ENCODE measurements at regions of chr6 and their contacts with region 1.

Region 1: DNA sequence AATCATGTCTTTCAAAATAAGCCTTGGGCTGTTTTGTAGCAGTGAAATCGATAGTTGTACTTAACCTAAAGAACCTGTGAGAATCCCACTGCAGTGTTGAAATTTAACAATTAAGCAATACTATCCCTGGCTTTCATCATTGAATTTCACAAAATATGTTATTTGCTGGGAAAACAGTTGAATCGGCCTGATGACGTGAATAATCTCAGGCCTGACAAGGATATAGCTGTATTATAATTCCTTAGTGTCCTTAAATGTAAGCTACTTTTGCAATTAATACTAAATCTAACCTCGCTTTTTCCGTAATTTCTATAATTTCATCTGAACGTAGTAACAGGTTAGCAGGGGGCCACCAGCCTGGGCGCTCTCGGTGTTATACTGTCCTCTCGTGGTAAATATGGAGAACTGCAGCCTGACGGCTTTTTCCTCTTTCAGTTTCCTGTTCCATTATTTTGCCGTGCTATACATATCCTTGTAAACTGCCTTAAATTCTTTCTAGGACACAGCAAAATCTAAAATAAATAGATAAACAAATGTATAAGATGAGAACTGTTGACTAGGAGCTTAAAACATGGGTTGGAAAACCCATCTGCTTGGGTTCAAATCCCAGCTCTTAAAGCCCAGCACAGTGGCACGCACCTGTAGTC is 24.0 kb downstream of the MTFR2 start:
- H3K4me3 ChIP-seq: no peak overlapping the region
- H3K27ac ChIP-seq: no peak overlapping the region
- H3K4me1 ChIP-seq: no peaks in the 10 kb centered on the region
- CTCF ChIP-seq: peak; percentile 86

Region 2: DNA sequence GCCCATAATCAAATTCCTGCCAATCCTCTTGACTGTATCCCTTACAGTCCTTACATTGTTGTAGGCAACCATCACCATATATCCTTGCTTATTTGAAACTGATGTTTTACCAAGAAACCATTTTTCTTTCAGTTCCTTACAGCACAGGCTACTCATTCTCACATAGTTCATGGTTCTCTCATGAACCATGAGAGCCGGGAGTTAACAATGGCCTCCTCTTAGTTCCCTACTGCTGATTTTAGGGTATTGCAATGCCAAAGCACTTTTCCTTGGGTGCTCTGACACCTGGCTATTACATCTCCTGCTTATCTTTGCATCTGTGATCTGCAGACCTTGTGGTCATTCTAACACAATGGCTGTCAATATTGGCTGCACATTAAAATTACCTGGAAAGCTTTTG is 911.6 kb before region 1 on chr6:
- CTCF ChIA-PET with region 1: no interaction called
- POLR2A ChIA-PET with region 1: no interaction called
- H3K4me3 ChIP-seq: no peak overlapping the region
- H3K27ac ChIP-seq: no peak overlapping the region
- H3K4me1 ChIP-seq: no peaks in the 10 kb centered on the region
- CTCF ChIP-seq: no peak

Region 3: GRCh38 chr6:135520781-135521180 is 705.4 kb before region 1 on chr6:
- CTCF ChIA-PET with region 1: interaction called, 12 read pairs
- POLR2A ChIA-PET with region 1: no interaction called
- H3K4me3 ChIP-seq: no peak overlapping the region
- H3K27ac ChIP-seq: no peak overlapping the region
- H3K4me1 ChIP-seq: no peaks in the 10 kb centered on the region
- CTCF ChIP-seq: no peak

Region 4: DNA sequence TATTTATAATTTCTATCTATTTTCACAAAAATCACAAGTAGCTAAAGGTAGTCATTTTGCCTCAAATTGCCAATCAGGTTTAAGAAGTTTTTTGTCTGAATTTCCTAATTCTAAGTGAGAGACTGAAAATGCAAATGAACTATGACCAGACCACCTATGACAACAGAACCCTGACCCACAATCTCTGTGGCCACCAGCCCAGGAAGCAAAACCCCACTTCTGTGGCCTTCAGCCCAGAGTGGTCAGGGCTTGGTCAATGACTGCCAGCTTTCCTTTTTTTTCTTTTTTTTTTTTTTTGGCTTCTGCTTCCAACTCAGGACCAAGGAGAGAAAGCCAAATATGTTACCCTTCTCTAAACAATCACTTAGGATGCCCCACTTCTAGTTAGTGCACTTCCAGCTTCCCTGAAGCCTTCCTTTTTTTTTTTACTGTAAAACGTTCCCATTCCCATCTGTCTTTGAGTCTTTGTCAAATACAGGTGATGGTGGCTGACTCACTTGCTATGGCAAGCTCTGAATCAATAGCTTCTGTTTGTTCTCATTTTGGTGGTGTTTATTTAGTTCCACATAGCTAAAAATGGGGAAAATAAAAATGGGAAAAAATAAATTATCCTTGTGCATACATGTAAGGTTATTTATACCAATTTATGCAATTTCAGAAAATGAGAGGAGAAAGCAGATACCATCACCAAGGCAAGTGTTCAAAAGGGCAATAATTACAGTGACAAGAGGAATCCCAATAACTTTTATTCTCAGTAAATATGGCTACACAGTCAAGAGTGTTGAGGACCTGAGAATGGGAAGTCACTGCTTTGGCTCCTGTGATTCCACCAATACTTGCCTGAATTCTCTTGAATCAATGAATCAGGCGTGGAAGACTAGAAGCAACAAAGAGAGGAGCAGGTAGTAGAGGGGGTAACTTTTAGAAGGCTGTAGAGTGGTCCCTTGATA is 544.9 kb before region 1 on chr6:
- CTCF ChIA-PET with region 1: interaction called, 34 read pairs
- POLR2A ChIA-PET with region 1: no interaction called
- H3K4me3 ChIP-seq: no peak overlapping the region
- H3K27ac ChIP-seq: no peak overlapping the region
- H3K4me1 ChIP-seq: no peaks in the 10 kb centered on the region
- CTCF ChIP-seq: no peak

Region 5: GRCh38 chr6:135938576-135939207 is 287.5 kb before region 1 on chr6:
- CTCF ChIA-PET with region 1: interaction called, 19 read pairs
- POLR2A ChIA-PET with region 1: no interaction called
- H3K4me3 ChIP-seq: no peak overlapping the region
- H3K27ac ChIP-seq: no peak overlapping the region
- H3K4me1 ChIP-seq: peaks cover 4% of the 10 kb centered on the region
- CTCF ChIP-seq: no peak

Region 6: GRCh38 chr6:136201732-136202131 is 24.4 kb before region 1 on chr6:
- CTCF ChIA-PET with region 1: interaction called, 26 read pairs
- POLR2A ChIA-PET with region 1: no interaction called
- H3K4me3 ChIP-seq: no peak overlapping the region
- H3K27ac ChIP-seq: no peak overlapping the region
- H3K4me1 ChIP-seq: no peaks in the 10 kb centered on the region
- CTCF ChIP-seq: peak; percentile 27

Region 7: DNA sequence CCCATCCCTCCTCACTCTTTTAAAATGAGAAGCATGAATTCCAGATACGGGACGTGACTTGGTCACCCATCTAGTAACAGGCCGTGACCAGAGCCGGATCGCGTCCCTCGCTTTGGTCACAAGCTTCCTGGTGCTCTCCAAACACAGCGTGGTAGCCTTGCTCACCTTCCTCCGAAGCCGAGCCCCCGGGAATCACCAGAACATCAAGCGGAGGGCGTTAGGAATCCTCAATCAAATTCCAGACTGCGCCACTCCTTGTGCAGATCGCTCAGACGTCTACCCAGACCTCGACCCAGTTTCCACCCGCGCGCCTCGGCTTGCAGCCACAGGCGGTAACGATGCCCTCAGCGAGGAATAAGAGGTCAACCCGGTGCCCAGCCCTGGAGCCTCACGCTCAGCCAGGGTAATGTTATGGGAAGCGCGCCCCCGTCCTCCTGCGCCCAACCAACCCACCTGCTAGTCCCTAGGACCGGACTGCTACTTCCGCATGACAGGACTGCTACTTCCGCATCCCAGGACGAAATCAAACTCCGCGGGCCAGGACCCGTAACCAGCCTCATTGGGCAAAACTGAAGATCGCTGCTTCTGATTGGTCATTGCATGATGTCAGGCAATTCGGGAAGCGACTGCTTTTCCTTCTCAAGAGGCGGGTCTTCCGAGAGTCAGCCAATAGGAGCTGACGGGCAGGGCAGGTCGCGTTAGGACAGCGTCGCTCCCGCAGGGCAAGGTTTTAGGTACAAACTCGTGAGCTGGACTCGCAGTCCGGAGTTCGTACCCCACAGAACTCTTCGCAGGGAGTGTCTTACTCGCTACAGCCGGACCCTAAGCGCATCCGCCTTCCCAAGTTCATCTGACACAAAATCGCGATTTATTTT is 23.9 kb after region 1 on chr6 and contains the start of gene MTFR2:
- CTCF ChIA-PET with region 1: interaction called, 7 read pairs
- POLR2A ChIA-PET with region 1: interaction called, 11 read pairs
- H3K4me3 ChIP-seq: peak within 1 kb of the TSS; percentile 80
- H3K27ac ChIP-seq: peak within 1 kb of the TSS; percentile 51
- H3K4me1 ChIP-seq: peaks cover 12% of the 10 kb centered on the region; the same call in 1 of the 2 replicates
- CTCF ChIP-seq: peak; percentile 87; the same call in 1 of the 2 replicates